ENCODE measurements at regions of chr3 and their contacts with region 1.

Region 1: DNA sequence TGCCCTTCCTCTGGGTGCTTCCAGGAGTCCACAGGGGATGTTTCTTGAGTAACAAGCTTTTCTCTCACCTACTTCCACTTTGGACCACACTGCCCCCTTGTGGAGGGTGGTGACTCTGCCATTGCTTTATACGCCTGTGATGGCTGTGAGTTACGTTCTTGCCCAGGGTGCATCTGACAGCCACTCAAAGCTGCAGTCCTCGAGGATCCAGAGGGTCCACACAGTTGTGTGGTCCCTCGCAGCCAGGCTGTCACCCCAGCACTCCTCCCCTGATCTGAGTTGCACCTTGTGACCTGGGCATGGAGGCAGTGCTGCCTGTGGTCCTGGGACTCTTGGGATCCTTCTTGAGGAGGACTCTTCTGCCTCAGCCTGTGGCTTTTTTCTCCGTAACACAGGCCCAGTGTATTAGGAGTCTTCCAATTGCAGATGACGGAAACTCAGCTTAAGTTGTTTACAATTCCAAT is 23.4 kb downstream of the FOXL2 start:
- DNase-seq: peak; percentile 81
- ATAC-seq: peak; percentile 82
- H3K4me3 ChIP-seq: peak overlapping the region in 1 of 2 experiments; percentile 19; a peak in 1 of 4 replicates
- H3K27ac ChIP-seq: no peak overlapping the region; the same call in 1 of the 2 replicates
- H3K4me1 ChIP-seq: peaks cover 27% of the 10 kb centered on the region
- H3K27me3 ChIP-seq: no peaks in the 10 kb centered on the region
- CTCF ChIP-seq: peak; percentile 96

Region 2: GRCh38 chr3:138465925-138466324 is 457.6 kb before region 1 on chr3:
- CTCF ChIA-PET with region 1: no interaction called
- POLR2A ChIA-PET with region 1: no interaction called
- in situ Hi-C with region 1: no loop called
- intact Hi-C with region 1: no loop called
- DNase-seq: no peak
- ATAC-seq: no peak
- H3K4me3 ChIP-seq: no peak overlapping the region
- H3K27ac ChIP-seq: no peak overlapping the region
- H3K4me1 ChIP-seq: no peaks in the 10 kb centered on the region
- H3K27me3 ChIP-seq: no peaks in the 10 kb centered on the region
- CTCF ChIP-seq: no peak

Region 3: GRCh38 chr3:138479438-138479863 is 444.1 kb before region 1 on chr3:
- CTCF ChIA-PET with region 1: interaction called, 5 read pairs
- POLR2A ChIA-PET with region 1: no interaction called
- in situ Hi-C with region 1: no loop called
- intact Hi-C with region 1: loop called (anchors 5 kb)
- DNase-seq: peak; percentile 51
- ATAC-seq: peak; percentile 78
- H3K4me3 ChIP-seq: no peak overlapping the region
- H3K27ac ChIP-seq: no peak overlapping the region
- H3K4me1 ChIP-seq: no peaks in the 10 kb centered on the region
- H3K27me3 ChIP-seq: no peaks in the 10 kb centered on the region
- CTCF ChIP-seq: peak; percentile 95

Region 4: DNA sequence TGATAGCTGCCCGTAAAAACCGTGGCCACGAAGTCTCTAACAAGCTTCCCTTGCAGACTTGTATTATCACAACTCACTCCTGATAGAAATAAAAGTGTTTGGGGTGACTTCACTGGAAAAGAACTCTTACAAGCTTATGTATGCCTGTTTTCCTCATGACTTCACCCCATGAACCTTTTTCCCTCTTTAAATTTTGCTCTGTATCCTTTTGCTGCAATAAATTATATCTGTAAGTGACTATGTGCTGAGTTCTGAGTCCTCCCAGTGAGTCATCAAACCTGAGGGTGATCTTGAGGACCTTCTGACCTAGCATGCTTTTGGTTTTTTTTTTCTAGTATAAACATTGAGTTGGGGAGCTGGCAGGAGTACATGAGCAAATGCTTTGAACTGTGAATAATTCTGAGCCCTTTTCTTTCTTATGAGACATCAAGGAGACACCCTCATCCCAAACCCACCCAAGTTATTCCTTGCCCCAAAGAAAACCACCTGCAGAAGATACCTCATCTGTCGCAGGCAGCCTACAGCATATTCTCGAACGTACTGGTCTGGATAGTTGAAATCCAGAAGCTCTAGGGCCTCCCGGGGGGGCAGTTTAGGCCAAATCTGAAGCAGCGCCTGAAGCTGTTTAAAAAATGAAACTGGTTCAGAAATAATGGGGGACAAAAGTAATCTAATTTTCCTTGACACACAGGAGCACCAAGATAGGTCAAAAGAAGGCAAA is 229.1 kb before region 1 on chr3:
- CTCF ChIA-PET with region 1: interaction called, 10 read pairs
- POLR2A ChIA-PET with region 1: no interaction called
- in situ Hi-C with region 1: no loop called
- intact Hi-C with region 1: loop called (anchors 2 kb)
- DNase-seq: peak; percentile 72
- ATAC-seq: peak; percentile 91
- H3K4me3 ChIP-seq: no peak overlapping the region
- H3K27ac ChIP-seq: peak overlapping the region; percentile 67
- H3K4me1 ChIP-seq: peaks cover 14% of the 10 kb centered on the region
- H3K27me3 ChIP-seq: no peaks in the 10 kb centered on the region
- CTCF ChIP-seq: no peak

Region 5: DNA sequence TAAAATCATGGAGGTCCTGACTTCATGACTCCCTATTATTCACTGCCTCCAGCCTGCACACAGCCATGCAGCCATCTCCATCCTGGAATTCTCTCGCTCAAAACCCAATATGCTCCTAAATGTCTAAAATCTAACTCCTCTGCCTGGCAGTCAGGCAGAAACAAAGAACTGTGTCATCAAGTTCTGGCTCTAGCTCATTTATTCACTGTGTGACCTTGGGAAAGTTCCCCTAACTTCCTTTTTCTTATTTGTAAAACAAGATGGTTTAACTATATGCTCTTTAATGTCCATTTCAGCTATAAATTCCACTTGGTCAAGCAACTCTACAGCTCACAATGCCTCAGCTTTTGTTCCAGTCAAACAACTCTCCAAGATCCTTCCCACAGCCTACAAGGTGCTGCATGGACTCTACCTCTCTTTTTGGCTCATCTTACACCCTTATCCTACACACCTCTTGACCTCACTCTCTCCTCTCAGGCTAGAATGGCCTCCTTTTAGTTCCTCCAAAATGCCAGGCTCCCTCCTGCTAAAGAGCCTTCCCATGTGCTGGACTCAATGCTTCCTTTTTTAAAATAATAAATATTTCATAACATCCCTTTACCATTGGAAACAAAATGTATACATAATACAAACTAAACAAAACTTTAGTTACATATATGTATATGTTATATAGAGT is 105.2 kb before region 1 on chr3:
- CTCF ChIA-PET with region 1: no interaction called
- POLR2A ChIA-PET with region 1: no interaction called
- in situ Hi-C with region 1: loop called (anchors 10 kb)
- intact Hi-C with region 1: no loop called
- DNase-seq: no peak
- ATAC-seq: peak; percentile 10; the same call in 1 of the 2 replicates
- H3K4me3 ChIP-seq: no peak overlapping the region
- H3K27ac ChIP-seq: peak overlapping the region; percentile 45
- H3K4me1 ChIP-seq: peaks cover 21% of the 10 kb centered on the region
- H3K27me3 ChIP-seq: no peaks in the 10 kb centered on the region
- CTCF ChIP-seq: no peak

Region 6: DNA sequence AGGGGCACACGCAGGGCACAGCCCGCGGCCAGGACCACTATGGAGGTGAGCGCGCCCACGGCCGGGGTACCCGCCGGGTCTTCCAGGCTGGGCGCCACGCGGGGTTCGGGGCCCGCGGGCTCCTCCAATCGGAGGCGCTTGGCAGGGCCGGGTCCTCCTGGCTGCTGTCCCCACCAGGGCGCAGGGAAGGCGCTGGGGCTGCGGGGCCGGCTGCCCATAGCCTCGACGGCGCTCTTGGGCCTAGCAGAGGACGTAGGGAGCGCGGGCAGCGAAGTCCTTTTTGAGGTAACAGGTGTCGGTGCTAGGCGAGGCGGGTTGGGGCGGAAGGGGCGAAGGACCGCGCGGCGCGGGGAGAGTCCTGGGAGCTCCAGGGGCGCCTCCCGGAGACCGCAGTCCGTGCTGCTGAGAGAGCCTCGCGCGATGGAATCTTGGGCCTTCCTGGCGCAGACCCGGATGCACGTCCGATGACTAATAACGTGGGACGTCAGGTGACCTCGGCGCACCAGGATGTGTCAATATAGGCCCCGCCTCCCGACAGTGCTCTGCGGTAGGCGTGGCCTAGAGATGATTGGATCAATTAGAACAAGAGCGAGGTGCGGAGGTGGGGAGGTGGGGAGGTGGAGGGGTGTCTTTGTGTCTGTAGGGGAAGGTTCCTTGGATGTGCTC is 82.6 kb after region 1 on chr3 and contains the start of gene PRR23A:
- CTCF ChIA-PET with region 1: no interaction called
- POLR2A ChIA-PET with region 1: no interaction called
- in situ Hi-C with region 1: no loop called
- intact Hi-C with region 1: no loop called
- DNase-seq: no peak
- ATAC-seq: no peak
- H3K4me3 ChIP-seq: no peak within 1 kb of the TSS
- H3K27ac ChIP-seq: no peak within 1 kb of the TSS
- H3K4me1 ChIP-seq: no peaks in the 10 kb centered on the region
- H3K27me3 ChIP-seq: no peaks in the 10 kb centered on the region
- CTCF ChIP-seq: no peak
- total RNA-seq, gene PRR23A: not detected